Mammary epithelial cell (primary cell): ENCODE measurements at regions of chr1 and their contacts with region 1.

Region 1: DNA sequence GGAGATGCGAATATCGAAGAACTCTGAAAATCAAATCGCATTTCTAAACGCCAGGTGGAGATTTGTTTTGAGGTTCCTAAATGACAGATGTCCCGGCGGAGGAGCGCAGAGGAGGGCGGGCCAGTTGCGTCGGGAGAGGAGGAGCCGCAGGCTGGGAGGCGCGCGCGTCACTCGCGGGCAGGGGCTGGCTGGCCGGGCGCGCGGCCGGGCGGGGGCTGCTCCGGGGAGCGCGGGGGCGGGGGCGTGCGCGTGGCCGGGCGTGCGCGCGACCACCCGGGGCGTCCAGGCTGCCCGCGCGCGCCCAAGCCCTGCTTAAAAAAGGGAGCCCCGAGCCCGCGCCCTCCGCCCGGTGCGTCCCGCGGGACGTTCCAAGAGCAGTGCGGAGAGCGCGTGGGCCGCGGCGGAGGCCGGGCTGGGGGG is 47.3 kb downstream of the H3-3A start:
- DNase-seq: peak; percentile 82
- H3K4me3 ChIP-seq: peak overlapping the region; percentile 53 to 82 (median 56)
- H3K27ac ChIP-seq: peak overlapping the region; percentile 74
- H3K4me1 ChIP-seq: peaks cover 18% of the 10 kb centered on the region
- H3K27me3 ChIP-seq: no peaks in the 10 kb centered on the region
- CTCF ChIP-seq: no peak

Region 2: GRCh38 chr1:226097866-226098625 is 11.8 kb before region 1 on chr1:
- CTCF ChIA-PET with region 1: no interaction called
- dilution Hi-C with region 1: no loop called
- in situ Hi-C with region 1: no loop called
- intact Hi-C with region 1: loop called (anchors 1 kb)
- DNase-seq: peak; percentile 89
- H3K4me3 ChIP-seq: no peak overlapping the region
- H3K27ac ChIP-seq: peak overlapping the region; percentile 44
- H3K4me1 ChIP-seq: peaks cover 21% of the 10 kb centered on the region
- H3K27me3 ChIP-seq: no peaks in the 10 kb centered on the region
- CTCF ChIP-seq: no peak